ENCODE measurements at regions of chr1 and their contacts with region 1.

Region 1: DNA sequence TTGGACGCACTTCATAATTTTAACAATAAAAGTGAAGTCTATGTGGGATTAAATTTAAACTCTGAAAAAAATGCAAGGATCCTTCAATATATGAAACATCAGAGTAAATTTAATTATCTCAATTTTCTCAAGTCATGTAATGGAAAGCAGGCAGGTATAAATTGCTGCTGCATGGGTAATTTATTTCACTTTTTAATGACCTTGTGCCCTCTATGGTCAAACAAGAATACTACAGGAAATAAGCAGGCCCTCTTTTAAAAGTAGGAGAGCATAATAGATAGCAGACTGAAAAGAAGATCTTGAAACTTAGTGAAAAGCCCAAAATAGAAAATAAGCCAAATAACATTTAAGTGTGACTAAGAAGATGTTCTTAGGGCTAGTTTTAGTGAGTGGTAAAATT is 22.9 kb downstream of the BCAS2 start:
- DNase-seq: peak; percentile 37
- CTCF ChIP-seq: peak; percentile 33

Region 2: DNA sequence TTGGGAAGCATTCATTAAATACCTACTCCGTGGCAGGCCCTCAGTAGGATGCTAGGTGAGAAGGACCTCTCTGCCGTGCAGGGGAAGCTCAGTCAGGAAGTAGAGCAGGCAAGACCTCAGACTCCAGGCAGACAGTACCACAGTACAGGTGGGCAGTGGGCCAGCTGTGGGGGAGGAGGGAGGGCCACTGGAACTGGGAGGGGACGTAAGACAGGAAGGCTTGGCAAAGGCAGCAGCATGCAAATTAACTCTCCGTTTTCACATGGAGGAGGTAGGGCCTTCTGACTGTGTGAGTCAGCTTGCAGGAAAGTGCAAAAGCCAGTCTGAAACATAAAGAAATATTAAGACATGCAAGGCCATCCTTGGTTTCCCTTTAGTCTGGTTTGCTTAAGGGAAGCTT is 205.3 kb before region 1 on chr1:
- in situ Hi-C with region 1: loop called (anchors 10 kb)
- DNase-seq: peak; percentile 13
- CTCF ChIP-seq: no peak

Measured in GM13976 (cell line).